PC-9 (cell line): ENCODE measurements at regions of chr1 and their contacts with region 1.

Region 1: DNA sequence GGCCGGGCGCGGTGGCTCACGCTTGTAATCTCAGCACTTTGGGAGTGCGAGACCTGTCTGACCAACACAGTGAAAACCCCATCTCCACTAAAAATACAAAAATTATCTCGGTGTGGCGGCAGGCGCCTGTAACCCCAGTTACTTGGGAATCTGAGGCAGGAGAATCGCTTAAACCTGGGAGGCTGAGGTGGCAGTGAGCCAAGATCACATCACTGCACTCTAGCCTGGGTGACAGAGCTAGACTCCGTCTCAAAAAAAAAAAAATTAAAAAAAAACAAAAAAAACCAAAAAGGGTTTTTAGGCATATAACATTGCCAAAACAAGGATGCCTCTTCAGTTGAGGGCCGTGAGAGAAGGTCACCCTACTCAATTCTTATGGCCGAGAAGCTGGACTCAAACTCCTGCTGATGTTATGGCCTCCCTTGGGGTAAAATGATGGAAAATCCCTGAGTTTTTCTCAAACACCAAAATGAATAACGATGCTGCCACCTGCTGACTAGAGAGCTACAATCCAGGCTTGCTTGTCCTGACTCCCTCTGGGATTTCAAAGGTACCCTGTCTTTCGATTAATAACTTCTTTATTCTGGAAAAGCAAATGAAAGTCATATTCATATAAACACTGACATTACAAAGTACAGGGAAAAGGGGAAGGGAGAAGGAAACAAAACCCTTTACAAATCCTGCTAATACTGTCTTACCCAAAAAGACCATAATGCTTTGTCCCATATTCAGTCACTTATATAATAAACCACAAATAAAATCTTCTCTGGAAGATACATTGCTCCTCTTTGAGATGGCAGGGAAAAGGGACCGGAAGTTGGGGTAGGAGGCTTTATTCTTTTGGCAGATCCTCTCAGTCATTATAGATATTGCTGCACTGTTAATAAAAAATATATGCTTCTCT is 10.7 kb downstream of the RAB42 start:
- DNase-seq: peak; percentile 47 to 50
- H3K4me3 ChIP-seq: no peak overlapping the region
- H3K27ac ChIP-seq: peak overlapping the region; percentile 89
- H3K4me1 ChIP-seq: peaks cover 23% of the 10 kb centered on the region
- H3K27me3 ChIP-seq: no peaks in the 10 kb centered on the region
- CTCF ChIP-seq: peak; percentile 75

Region 2: GRCh38 chr1:28359592-28360239 is 243.1 kb before region 1 on chr1:
- CTCF ChIA-PET with region 1: interaction called, 10 read pairs
- POLR2A ChIA-PET with region 1: no interaction called
- intact Hi-C with region 1: loop called (anchors 1 kb)
- DNase-seq: peak; percentile 35 to 62
- H3K4me3 ChIP-seq: no peak overlapping the region
- H3K27ac ChIP-seq: no peak overlapping the region
- H3K4me1 ChIP-seq: peaks cover 4% of the 10 kb centered on the region; the same call in 1 of the 2 replicates
- H3K27me3 ChIP-seq: no peaks in the 10 kb centered on the region
- CTCF ChIP-seq: peak; percentile 73

Region 3: DNA sequence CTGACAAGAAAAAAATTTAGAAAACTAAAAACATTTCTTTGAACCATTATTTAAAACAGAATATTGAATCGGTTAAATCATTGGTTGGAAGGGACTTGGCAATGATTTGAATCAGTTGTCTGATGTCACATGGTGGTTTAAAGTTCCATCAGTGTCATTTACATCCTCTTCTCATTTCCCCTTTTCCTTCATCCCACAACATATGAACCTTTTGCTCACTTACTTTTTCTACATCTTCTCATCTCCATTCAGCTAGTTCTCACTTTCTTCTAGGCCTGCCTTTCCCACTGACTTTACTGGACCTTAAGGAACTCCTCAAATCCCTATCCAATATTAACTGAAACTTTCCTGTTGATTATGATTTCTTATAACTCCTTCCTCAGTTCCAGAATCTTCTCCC is 174.8 kb before region 1 on chr1:
- CTCF ChIA-PET with region 1: no interaction called
- POLR2A ChIA-PET with region 1: no interaction called
- intact Hi-C with region 1: no loop called
- DNase-seq: no peak
- H3K4me3 ChIP-seq: no peak overlapping the region
- H3K27ac ChIP-seq: no peak overlapping the region
- H3K4me1 ChIP-seq: no peaks in the 10 kb centered on the region
- H3K27me3 ChIP-seq: no peaks in the 10 kb centered on the region
- CTCF ChIP-seq: no peak

Region 4: GRCh38 chr1:28449904-28450303 is 152.9 kb before region 1 on chr1:
- CTCF ChIA-PET with region 1: no interaction called
- POLR2A ChIA-PET with region 1: interaction called, 12 read pairs
- intact Hi-C with region 1: no loop called
- DNase-seq: peak; percentile 53 to 77
- H3K4me3 ChIP-seq: no peak overlapping the region
- H3K27ac ChIP-seq: peak overlapping the region; percentile 83
- H3K4me1 ChIP-seq: peaks cover 22% of the 10 kb centered on the region
- H3K27me3 ChIP-seq: no peaks in the 10 kb centered on the region
- CTCF ChIP-seq: no peak

Region 5: GRCh38 chr1:28518000-28518744 is 84.6 kb before region 1 on chr1:
- CTCF ChIA-PET with region 1: interaction called, 5 read pairs
- POLR2A ChIA-PET with region 1: interaction called, 16 read pairs
- intact Hi-C with region 1: loop called (anchors 1 kb)
- DNase-seq: peak; percentile 66 to 93
- H3K4me3 ChIP-seq: peak overlapping the region; percentile 93
- H3K27ac ChIP-seq: peak overlapping the region; percentile 78
- H3K4me1 ChIP-seq: peaks cover 19% of the 10 kb centered on the region
- H3K27me3 ChIP-seq: no peaks in the 10 kb centered on the region
- CTCF ChIP-seq: peak; percentile 94